ENCODE measurements at regions of chr17 and their contacts with region 1.

Region 1: GRCh38 chr17:43576563-43577229 is 30.6 kb upstream of the ETV4 start:
- DNase-seq: peak; percentile 74
- ATAC-seq: peak; percentile 83
- H3K4me3 Mint-ChIP-seq: no peak overlapping the region
- H3K27ac Mint-ChIP-seq: no peak overlapping the region
- H3K4me1 Mint-ChIP-seq: peaks cover 24% of the 10 kb centered on the region
- H3K27me3 Mint-ChIP-seq: peaks cover 4% of the 10 kb centered on the region

Region 2: DNA sequence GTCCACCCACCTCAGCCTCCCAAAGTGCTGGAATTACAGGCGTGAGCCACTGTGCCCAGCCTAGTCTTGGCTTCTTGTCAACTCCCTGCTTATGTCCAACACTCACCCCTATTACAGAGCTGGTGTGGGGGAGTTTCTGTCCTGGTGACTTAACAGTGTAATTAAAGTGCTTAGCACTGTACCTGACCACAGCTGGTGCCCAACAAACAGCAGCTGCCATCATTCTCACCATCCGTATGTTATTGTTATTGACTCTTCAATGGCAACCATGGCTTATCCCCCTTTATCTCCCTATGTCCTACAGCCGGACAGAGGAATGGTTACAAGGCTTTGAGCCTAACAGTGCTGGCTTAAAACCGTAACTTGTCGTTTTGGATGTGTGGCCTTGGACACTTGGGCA is 434.5 kb before region 1 on chr17:
- CTCF ChIA-PET with region 1: no interaction called
- POLR2A ChIA-PET with region 1: no interaction called
- DNase-seq: no peak
- ATAC-seq: no peak
- H3K4me3 Mint-ChIP-seq: no peak overlapping the region
- H3K27ac Mint-ChIP-seq: no peak overlapping the region
- H3K4me1 Mint-ChIP-seq: no peaks in the 10 kb centered on the region
- H3K27me3 Mint-ChIP-seq: no peaks in the 10 kb centered on the region

Region 3: DNA sequence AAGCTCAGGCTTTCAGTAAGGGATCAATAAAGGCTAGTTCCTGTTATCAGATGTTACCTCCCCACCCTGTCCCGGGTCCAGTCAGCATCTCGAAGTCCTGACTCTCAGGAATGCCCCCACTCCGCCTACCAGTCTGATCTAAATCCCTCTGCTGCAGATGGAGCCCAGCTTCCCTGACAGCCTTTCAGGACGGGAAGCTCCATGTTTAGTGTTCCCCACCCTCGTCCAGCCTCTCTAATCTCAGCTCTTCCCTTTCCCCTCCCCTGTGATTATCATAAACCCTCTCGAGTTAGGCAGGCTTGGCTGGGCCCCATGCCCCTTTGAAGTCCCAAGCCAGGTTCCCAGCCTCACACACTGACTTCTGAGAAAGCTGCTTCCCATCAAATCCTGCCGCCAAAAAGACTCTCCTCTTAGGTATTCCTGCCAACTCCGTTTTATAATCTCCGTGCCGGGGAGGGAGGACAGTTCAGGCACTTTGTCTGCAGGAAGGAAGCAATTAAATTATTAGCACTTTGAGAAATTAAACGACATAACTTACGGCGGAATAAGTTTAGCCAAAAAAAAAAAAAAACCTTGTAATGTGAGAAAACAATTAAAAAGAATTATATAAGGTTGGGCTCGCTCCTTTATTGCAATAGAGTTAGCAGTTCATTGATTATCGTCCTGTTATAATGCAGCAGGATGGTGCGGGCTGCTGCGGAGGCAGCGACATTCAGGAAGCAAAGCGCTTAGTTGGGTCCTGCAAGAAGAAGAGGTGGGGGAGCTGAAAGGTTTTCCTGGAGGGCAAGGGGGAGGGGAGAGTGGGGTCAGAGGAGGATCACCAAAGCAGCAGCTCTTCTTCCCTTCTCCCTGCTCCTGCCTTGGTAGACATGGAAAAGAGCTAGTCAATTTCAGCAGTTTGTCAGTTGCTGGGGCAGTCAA is 13.8 kb before region 1 on chr17:
- CTCF ChIA-PET with region 1: interaction called, 12 read pairs
- POLR2A ChIA-PET with region 1: no interaction called
- DNase-seq: no peak
- ATAC-seq: no peak
- H3K4me3 Mint-ChIP-seq: no peak overlapping the region
- H3K27ac Mint-ChIP-seq: no peak overlapping the region
- H3K4me1 Mint-ChIP-seq: no peaks in the 10 kb centered on the region
- H3K27me3 Mint-ChIP-seq: peaks cover 25% of the 10 kb centered on the region

Region 4: DNA sequence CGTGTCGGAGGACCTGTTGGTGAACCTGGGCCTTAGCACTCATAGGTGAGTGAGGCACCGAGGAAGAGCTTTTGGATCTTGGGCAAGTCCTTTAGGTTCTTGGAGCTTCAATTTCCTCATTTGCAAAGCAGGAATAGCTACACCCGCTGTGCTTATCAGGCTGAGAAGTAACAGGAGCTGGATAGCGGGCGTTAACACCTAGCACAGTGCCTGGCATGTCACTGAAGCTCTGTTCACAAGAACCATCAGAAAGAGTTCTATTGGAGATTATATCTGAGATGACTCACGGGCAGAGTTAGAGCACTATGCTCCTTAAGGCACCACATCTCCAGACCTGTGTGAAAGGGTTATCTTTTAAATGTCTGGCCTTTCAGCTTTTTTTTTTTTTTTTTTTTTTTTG is 72.2 kb after region 1 on chr17:
- CTCF ChIA-PET with region 1: interaction called, 15 read pairs
- POLR2A ChIA-PET with region 1: no interaction called
- DNase-seq: no peak
- ATAC-seq: no peak
- H3K4me3 Mint-ChIP-seq: no peak overlapping the region
- H3K27ac Mint-ChIP-seq: no peak overlapping the region
- H3K4me1 Mint-ChIP-seq: peaks cover 4% of the 10 kb centered on the region
- H3K27me3 Mint-ChIP-seq: peaks cover 16% of the 10 kb centered on the region

Region 5: GRCh38 chr17:43673516-43674323 is 97.0 kb after region 1 on chr17:
- CTCF ChIA-PET with region 1: interaction called, 243 read pairs
- POLR2A ChIA-PET with region 1: interaction called, 3 read pairs
- DNase-seq: peak; percentile 81
- ATAC-seq: peak; percentile 59
- H3K4me3 Mint-ChIP-seq: no peak overlapping the region
- H3K27ac Mint-ChIP-seq: no peak overlapping the region
- H3K4me1 Mint-ChIP-seq: peaks cover 20% of the 10 kb centered on the region
- H3K27me3 Mint-ChIP-seq: peaks cover 10% of the 10 kb centered on the region

Region 6: GRCh38 chr17:43694077-43694870 is 117.6 kb after region 1 on chr17:
- CTCF ChIA-PET with region 1: interaction called, 29 read pairs
- POLR2A ChIA-PET with region 1: no interaction called
- DNase-seq: peak; percentile 85
- ATAC-seq: peak; percentile 93
- H3K4me3 Mint-ChIP-seq: no peak overlapping the region
- H3K27ac Mint-ChIP-seq: no peak overlapping the region
- H3K4me1 Mint-ChIP-seq: peaks cover 5% of the 10 kb centered on the region
- H3K27me3 Mint-ChIP-seq: peaks cover 12% of the 10 kb centered on the region

Region 7: DNA sequence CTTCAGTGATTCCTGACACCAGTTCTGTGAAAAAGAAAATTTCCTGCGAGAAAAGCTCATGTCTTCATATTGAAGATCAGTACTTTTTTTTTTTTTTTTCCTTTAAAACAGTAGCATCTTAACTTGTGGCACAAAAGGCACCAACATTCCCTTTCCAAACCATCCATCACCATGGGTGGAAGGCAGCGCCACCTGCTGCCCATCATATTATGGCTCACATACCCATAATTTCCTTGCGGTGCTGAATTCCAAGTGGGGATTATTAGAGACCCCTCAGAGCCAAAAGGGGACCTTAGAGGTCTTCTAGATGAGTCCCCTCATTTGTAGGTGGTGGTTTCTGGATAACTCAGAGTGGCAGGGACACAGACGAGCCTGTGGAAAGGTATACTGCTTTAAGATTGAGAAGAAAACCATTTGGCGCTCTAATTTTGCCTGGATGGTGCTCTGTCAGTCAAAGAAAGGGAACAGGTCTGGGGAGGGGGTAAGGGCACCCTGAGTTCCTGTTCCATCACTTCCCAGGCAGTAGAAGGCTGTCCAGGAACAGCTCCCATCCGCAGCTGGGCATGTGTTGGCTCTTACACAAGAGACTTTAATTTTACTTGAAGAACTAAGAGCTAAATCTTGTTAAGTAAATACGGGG is 189.8 kb after region 1 on chr17:
- CTCF ChIA-PET with region 1: interaction called, 43 read pairs
- POLR2A ChIA-PET with region 1: no interaction called
- DNase-seq: peak; percentile 58
- ATAC-seq: no peak
- H3K4me3 Mint-ChIP-seq: no peak overlapping the region
- H3K27ac Mint-ChIP-seq: no peak overlapping the region
- H3K4me1 Mint-ChIP-seq: no peaks in the 10 kb centered on the region
- H3K27me3 Mint-ChIP-seq: peaks cover 7% of the 10 kb centered on the region

Region 8: GRCh38 chr17:43832976-43833829 is 256.5 kb after region 1 on chr17 and contains the start of gene MPP3:
- CTCF ChIA-PET with region 1: no interaction called
- POLR2A ChIA-PET with region 1: no interaction called
- DNase-seq: peak; percentile 37
- ATAC-seq: peak; percentile 84
- H3K4me3 Mint-ChIP-seq: peak within 1 kb of the TSS; percentile 50
- H3K27ac Mint-ChIP-seq: no peak within 1 kb of the TSS
- H3K4me1 Mint-ChIP-seq: peaks cover 5% of the 10 kb centered on the region
- H3K27me3 Mint-ChIP-seq: peaks cover 45% of the 10 kb centered on the region
- total RNA-seq, gene MPP3: not detected